Activated T-helper 1 cell treated with anti-CD3 and anti-CD28 coated beads, Interleukin-12 subunit alpha, Interleukin-12 subunit beta, Interleukin-2, Interleukin-4 antibody, amounts not matched to agents 30 ng/mL and 10 ng/mL and 1 ng/mL, durations not matched to agents 14 hours and 24 hours and 36 hours (primary cell): ENCODE measurements at regions of chr6 and their contacts with region 1.

Region 1: GRCh38 chr6:105810105-105810921 is 275.8 kb upstream of the PRDM1 start:
- DNase-seq: peak; percentile 73
- H3K4me3 Mint-ChIP-seq: peak overlapping the region; percentile 58
- H3K27ac Mint-ChIP-seq: peak overlapping the region; percentile 92
- H3K4me1 Mint-ChIP-seq: peaks cover 76% of the 10 kb centered on the region
- H3K27me3 Mint-ChIP-seq: no peaks in the 10 kb centered on the region

Region 2: GRCh38 chr6:105733565-105734162 is 76.6 kb before region 1 on chr6:
- intact Hi-C with region 1: loop called (anchors 2 kb)
- DNase-seq: no peak
- H3K4me3 Mint-ChIP-seq: no peak overlapping the region
- H3K27ac Mint-ChIP-seq: no peak overlapping the region
- H3K4me1 Mint-ChIP-seq: peaks cover 44% of the 10 kb centered on the region
- H3K27me3 Mint-ChIP-seq: peaks cover 3% of the 10 kb centered on the region

Region 3: GRCh38 chr6:105757512-105758200 is 52.7 kb before region 1 on chr6:
- intact Hi-C with region 1: loop called (anchors 1 kb)
- DNase-seq: peak; percentile 28
- H3K4me3 Mint-ChIP-seq: peak overlapping the region; percentile 64
- H3K27ac Mint-ChIP-seq: peak overlapping the region; percentile 77
- H3K4me1 Mint-ChIP-seq: peaks cover 61% of the 10 kb centered on the region
- H3K27me3 Mint-ChIP-seq: no peaks in the 10 kb centered on the region

Region 4: GRCh38 chr6:105873171-105873704 is 62.9 kb after region 1 on chr6:
- intact Hi-C with region 1: loop called (anchors 1 kb)
- DNase-seq: no peak
- H3K4me3 Mint-ChIP-seq: no peak overlapping the region
- H3K27ac Mint-ChIP-seq: no peak overlapping the region
- H3K4me1 Mint-ChIP-seq: peaks cover 15% of the 10 kb centered on the region
- H3K27me3 Mint-ChIP-seq: peaks cover 14% of the 10 kb centered on the region